BJ (cell line): ENCODE measurements at regions of chr4 and their contacts with region 1.

Region 1: GRCh38 chr4:81214881-81215868 is at the start of gene PRKG2:
- DNase-seq: no peak
- H3K4me3 ChIP-seq: peak within 1 kb of the TSS; percentile 52
- H3K27me3 ChIP-seq: peaks cover 21% of the 10 kb centered on the region
- CTCF ChIP-seq: no peak
- polyA plus RNA-seq, gene PRKG2: 0.16 and 0.47 TPM in 2 replicates

Region 2: GRCh38 chr4:79893456-79893855 is 1321.7 kb before region 1 on chr4:
- CTCF ChIA-PET with region 1: no interaction called
- POLR2A ChIA-PET with region 1: interaction called, 37 read pairs
- DNase-seq: no peak
- H3K4me3 ChIP-seq: no peak overlapping the region
- H3K27me3 ChIP-seq: no peaks in the 10 kb centered on the region
- CTCF ChIP-seq: no peak